Right cardiac atrium (tissue), 5 donors: ENCODE measurements at regions of chr3 and their contacts with region 1.

Region 1: GRCh38 chr3:98784666-98785600 is 21.8 kb downstream of the ST3GAL6 start:
- DNase-seq: no peak
- ATAC-seq: peak; percentile 62 to 64
- H3K4me3 ChIP-seq: no peak overlapping the region
- H3K27ac ChIP-seq: peak overlapping the region; percentile 65
- H3K4me1 ChIP-seq: peaks cover 9% of the 10 kb centered on the region
- H3K27me3 ChIP-seq: no peaks in the 10 kb centered on the region

Region 2: DNA sequence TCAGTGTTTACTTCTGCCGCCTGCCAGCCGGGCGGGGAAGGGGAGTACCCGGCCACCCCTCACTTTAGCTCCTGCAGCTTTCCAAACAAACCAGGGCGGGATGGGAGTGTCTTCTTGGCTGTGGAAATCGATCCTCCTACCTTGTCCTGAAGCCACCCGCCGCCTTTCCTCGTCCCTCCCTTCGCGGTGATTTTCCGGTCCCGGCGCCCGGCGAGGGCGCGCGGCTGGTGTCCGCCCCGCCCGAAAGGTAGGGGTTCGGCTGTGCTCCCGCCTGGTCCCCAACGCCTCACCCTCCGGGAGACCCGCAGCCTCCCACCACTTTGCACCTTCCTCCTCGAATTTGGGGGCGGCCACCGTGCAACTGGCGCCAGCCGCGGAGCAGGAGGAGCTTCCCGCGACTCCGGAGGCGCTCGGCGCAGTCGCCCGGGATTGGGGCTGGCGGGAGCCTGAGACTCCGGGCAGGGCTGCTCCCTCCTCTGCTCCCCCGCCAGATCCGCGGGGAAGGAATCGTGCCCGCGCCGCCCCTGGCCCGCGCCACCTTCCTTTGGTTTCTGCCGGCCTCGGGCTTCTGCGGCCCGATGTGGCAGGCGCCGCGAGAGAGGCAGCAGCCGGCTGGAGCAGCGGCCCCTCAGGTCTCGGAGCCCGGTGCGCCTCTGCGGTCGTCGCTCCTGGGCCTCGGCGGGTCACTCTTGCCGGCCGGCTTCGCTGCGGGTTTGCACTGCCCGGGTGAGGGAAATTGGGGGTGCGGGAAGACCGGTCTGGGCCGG is 52.5 kb before region 1 on chr3:
- intact Hi-C with region 1: loop called in 3 of 4 experiments (anchors 10 kb)
- DNase-seq: peak; percentile 60 to 82 (median 80)
- ATAC-seq: peak; percentile 89
- H3K4me3 ChIP-seq: peak overlapping the region; percentile 77
- H3K27ac ChIP-seq: peak overlapping the region; percentile 50
- H3K4me1 ChIP-seq: peaks cover 4% of the 10 kb centered on the region
- H3K27me3 ChIP-seq: no peaks in the 10 kb centered on the region